ENCODE measurements at regions of chr2 and their contacts with region 1.

Region 1: GRCh38 chr2:219560037-219560892 is 11.1 kb downstream of the OBSL1 start:
- DNase-seq: no peak
- ATAC-seq: peak; percentile 79
- H3K4me3 Mint-ChIP-seq: no peak overlapping the region
- H3K27ac Mint-ChIP-seq: no peak overlapping the region
- H3K4me1 Mint-ChIP-seq: no peaks in the 10 kb centered on the region
- H3K27me3 Mint-ChIP-seq: peaks cover 6% of the 10 kb centered on the region
- CTCF ChIP-seq: peak; percentile 81

Region 2: GRCh38 chr2:219543601-219544358 is 16.5 kb before region 1 on chr2 and contains the starts of genes CHPF and TMEM198:
- CTCF ChIA-PET with region 1: interaction called, 26 read pairs
- POLR2A ChIA-PET with region 1: no interaction called
- intact Hi-C with region 1: no loop called
- DNase-seq: peak; percentile 97
- ATAC-seq: peak; percentile 85
- H3K4me3 Mint-ChIP-seq: peak within 1 kb of the TSS; percentile 93
- H3K27ac Mint-ChIP-seq: peak within 1 kb of the TSS; percentile 77
- H3K4me1 Mint-ChIP-seq: peaks cover 21% of the 10 kb centered on the region
- H3K27me3 Mint-ChIP-seq: peaks cover 15% of the 10 kb centered on the region
- CTCF ChIP-seq: no peak
- total RNA-seq, gene CHPF: 16.6 to 18.4 TPM
- total RNA-seq, gene TMEM198: 2.1 to 2.2 TPM

Region 3: DNA sequence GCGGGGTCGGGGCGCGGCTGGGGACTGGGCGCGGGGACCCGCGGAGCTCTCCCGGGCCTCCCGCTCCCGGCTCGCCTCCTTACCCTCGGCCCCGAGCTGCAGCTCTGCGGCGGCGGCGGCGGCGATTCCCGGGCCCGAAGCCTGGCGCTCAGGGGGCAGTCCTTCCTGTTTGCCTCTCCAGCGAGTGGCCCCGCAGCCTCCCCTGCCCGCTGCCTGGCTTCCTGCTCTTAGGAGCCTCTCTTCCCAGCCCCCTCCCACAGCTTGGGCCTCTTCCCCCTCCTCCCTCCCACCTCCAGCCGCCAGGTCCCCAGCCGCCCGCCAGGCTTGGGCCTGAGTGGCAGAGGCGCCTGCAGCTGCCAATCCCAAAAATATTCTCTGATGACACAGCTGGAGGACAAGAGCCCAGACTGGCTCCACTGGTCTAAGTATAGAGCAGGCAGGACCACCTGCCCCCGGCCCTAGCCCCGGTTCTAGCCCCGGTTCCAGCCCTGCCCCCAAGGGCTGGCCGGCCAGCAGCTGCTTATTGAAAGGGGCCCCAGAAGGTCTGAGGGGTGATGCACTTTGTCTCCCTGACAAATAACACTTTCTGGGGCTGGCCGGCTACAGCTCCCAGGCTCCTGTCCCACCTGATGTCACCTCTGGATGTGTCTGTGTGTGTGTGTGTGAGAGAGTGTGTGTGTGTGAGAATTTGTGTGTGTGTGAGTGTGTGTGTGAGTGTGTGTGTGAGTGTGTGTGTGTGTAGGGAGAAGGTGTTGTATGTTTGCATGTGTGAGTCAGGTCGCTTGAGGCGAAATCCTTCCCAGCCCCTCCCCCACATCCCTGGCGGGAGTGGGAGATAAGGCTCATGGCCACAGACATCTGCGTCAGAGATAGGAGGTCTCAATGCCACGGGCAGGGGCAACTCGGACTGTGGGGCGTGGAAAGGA is 11.3 kb after region 1 on chr2 and contains the start of gene OBSL1:
- CTCF ChIA-PET with region 1: interaction called, 22 read pairs
- POLR2A ChIA-PET with region 1: interaction called, 3 read pairs
- intact Hi-C with region 1: no loop called
- DNase-seq: no peak
- ATAC-seq: peak; percentile 27
- H3K4me3 Mint-ChIP-seq: peak within 1 kb of the TSS; percentile 47
- H3K27ac Mint-ChIP-seq: no peak within 1 kb of the TSS
- H3K4me1 Mint-ChIP-seq: no peaks in the 10 kb centered on the region
- H3K27me3 Mint-ChIP-seq: peaks cover 39% of the 10 kb centered on the region
- CTCF ChIP-seq: no peak
- total RNA-seq, gene OBSL1: 1.3 to 1.4 TPM

Region 4: GRCh38 chr2:219597552-219598307 is 37.5 kb after region 1 on chr2 and contains the start of gene STK11IP:
- CTCF ChIA-PET with region 1: interaction called, 20 read pairs
- POLR2A ChIA-PET with region 1: no interaction called
- intact Hi-C with region 1: no loop called
- DNase-seq: peak; percentile 97
- ATAC-seq: peak; percentile 94
- H3K4me3 Mint-ChIP-seq: peak within 1 kb of the TSS; percentile 95
- H3K27ac Mint-ChIP-seq: peak within 1 kb of the TSS; percentile 98
- H3K4me1 Mint-ChIP-seq: peaks cover 22% of the 10 kb centered on the region
- H3K27me3 Mint-ChIP-seq: no peaks in the 10 kb centered on the region
- CTCF ChIP-seq: no peak
- total RNA-seq, gene STK11IP: 26.4 to 27.5 TPM

Region 5: DNA sequence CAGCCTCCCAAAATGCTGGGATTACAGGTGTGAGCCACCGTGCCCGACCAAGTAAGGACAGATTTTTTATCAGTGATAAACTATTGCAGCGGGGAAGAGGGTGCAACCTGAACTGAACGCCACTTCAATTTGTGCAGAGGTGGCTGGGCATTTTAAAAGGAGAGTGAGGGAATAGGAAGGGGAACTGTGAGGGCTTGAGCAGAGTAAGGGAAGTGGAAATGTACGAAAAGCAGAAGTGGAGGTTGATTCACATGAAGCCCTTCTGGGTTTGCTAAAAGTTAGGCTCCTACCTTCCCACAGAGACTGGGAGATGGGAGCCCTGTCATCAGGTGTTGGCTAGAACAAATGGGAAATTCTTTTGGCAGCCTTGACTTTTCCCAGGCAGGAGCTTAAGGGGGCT is 43.5 kb after region 1 on chr2:
- CTCF ChIA-PET with region 1: interaction called, 14 read pairs
- POLR2A ChIA-PET with region 1: no interaction called
- intact Hi-C with region 1: no loop called
- DNase-seq: no peak
- ATAC-seq: no peak
- H3K4me3 Mint-ChIP-seq: no peak overlapping the region
- H3K27ac Mint-ChIP-seq: no peak overlapping the region
- H3K4me1 Mint-ChIP-seq: peaks cover 4% of the 10 kb centered on the region
- H3K27me3 Mint-ChIP-seq: no peaks in the 10 kb centered on the region
- CTCF ChIP-seq: no peak

Region 6: DNA sequence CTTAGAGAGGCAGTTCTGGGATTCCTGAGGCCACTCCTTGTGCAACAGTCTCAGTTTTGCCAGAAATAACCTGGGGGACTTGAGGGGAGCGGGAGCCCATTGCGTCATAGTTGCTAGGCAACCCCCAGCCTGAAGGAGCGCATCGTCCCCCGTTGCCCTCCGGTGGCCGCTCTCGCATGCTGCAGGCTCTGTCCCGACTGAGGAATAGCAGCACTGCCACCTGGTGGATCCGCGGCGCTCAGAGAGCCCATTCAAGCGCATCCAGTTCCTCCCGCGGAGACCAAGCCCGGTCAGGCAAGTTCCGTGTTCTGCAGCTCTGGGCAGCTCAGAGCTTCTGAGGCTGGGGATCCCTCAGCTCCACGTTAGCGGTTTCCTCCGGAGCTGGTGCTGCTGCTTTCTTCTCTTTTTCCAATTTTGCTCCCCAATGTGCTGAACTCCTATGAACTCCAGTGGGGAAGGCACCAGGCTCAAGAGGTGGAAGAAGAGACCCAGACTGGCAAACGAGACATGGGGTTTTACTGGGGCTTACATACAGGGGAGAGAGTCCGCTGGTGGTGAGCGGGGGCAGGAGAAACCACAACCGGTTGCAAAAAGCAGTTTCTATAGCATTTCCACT is 82.3 kb after region 1 on chr2:
- CTCF ChIA-PET with region 1: interaction called, 10 read pairs
- POLR2A ChIA-PET with region 1: no interaction called
- intact Hi-C with region 1: no loop called
- DNase-seq: peak; percentile 97
- ATAC-seq: peak; percentile 100
- H3K4me3 Mint-ChIP-seq: no peak overlapping the region
- H3K27ac Mint-ChIP-seq: no peak overlapping the region
- H3K4me1 Mint-ChIP-seq: peaks cover 12% of the 10 kb centered on the region
- H3K27me3 Mint-ChIP-seq: peaks cover 14% of the 10 kb centered on the region
- CTCF ChIP-seq: peak; percentile 98

Measured in activated CD8-positive, alpha-beta T cell treated with anti-CD3 and anti-CD28 coated beads for 36 hours (primary cell).